ENCODE measurements at regions of chr2 and their contacts with region 1.

Region 1: DNA sequence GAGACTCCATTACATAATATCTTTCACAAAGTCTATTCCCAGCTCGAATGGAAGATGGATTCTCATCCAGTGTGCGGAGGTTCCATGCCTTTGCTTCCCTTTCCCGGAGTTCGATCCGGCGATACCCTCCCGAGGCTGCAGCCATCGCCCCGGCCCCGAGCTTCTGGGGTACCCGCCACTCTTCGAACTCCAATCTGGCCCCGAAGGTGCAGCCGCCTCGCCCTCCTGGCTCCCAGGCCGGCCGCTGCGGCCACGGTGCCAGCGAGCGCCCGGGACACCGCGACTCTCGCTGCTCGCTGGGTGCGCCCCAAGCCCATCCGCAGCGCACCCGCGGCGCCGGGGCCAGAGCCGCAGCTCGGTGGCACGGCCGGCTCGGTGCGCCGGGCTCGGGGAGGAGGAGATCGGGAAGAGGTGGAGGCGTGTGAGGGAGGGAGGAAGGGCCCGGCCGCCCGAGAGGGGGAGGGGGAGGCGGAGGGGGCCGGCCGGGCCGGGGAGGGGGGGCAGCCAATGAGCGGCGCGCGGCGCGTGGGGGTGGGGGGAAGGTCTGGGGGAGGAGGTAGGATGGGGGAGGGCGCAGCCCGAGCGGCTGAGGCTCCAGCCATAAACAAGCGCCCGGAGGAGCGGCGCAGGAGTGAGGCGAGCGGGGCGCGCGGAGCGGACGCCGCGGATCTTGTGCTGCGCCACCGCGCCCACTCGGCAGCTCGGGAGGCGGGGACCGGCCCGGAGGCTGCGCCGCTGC is at the start of gene CRIM1:
- DNase-seq: peak; percentile 84
- H3K4me3 Mint-ChIP-seq: peak within 1 kb of the TSS; percentile 99
- H3K27ac Mint-ChIP-seq: peak within 1 kb of the TSS; percentile 76
- H3K4me1 Mint-ChIP-seq: peaks cover 43% of the 10 kb centered on the region
- H3K27me3 Mint-ChIP-seq: no peaks in the 10 kb centered on the region
- CTCF ChIP-seq: no peak
- total RNA-seq, gene CRIM1: 48.0 and 57.6 TPM in 2 replicates

Region 2: GRCh38 chr2:36376319-36376765 is 21.0 kb after region 1 on chr2:
- CTCF ChIA-PET with region 1: interaction called, 4 read pairs
- intact Hi-C with region 1: loop called (anchors 2 kb)
- DNase-seq: peak; percentile 66
- H3K4me3 Mint-ChIP-seq: peak overlapping the region; percentile 66
- H3K27ac Mint-ChIP-seq: peak overlapping the region; percentile 86
- H3K4me1 Mint-ChIP-seq: peaks cover 72% of the 10 kb centered on the region
- H3K27me3 Mint-ChIP-seq: no peaks in the 10 kb centered on the region
- CTCF ChIP-seq: no peak

Region 3: DNA sequence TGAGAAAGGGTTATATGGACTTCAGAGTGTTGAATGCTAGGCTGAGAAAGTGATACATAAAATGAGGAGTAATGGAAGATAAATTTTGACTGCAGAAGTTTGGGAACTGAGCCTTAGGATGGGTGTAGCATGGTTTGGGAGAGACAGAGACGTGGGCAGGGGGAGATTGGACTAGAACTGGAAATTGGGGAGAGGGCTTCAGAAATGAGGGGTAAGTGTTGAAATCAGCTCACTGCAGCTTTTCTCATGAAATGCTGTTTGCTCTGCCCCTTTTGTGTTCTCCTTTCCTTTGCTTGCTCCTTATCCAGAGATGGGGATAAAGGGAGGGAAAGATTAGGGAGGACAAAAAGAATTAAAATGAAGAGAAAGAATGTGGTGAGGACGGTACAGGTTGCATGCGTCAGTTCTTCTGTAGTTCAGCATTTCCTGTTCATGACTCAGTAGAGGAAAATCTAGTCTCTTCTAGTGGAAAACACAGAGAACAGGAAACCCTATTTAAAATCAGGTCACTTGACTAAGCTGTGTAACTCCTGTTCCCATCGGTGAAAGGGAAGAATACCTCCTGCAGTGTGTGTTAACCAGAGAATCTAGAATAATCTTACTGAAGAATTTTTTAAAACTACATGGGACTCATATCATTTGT is 105.8 kb after region 1 on chr2:
- CTCF ChIA-PET with region 1: interaction called, 15 read pairs
- intact Hi-C with region 1: loop called (anchors 1 kb)
- DNase-seq: no peak
- H3K4me3 Mint-ChIP-seq: no peak overlapping the region
- H3K27ac Mint-ChIP-seq: no peak overlapping the region
- H3K4me1 Mint-ChIP-seq: peaks cover 16% of the 10 kb centered on the region
- H3K27me3 Mint-ChIP-seq: no peaks in the 10 kb centered on the region
- CTCF ChIP-seq: no peak

Region 4: DNA sequence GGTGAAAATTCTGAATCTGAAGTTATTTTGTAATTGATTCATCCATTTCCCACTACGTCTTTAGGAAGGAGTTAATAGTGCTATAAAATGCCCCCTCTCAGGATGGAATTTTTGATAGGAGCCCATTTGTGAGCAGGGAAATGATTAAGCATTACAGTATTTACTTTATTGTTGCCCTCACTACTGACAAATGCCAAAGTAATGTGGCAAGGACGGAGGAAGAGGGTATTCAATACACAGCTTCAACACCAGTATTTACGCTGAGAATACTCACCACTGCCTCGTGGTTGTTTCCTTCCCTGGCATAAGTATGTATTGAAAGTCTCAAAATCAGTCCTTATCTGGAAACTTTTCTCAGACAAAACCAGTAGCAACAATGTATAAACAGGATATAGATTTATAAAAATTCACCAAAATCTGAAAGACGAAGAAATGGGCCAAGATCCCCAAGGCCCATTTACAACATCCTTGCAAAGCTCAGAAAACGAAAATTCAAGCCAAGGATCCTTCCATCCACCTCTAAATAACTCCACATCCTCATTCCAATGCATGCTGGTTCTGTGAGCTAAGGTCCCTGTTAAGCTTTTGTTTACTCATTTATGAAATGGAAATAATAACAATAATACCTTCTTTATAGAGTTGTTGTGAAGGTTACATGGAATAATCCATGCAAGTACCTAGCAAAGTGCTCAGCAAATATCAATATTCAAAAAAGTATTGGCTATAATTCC is 213.4 kb after region 1 on chr2:
- CTCF ChIA-PET with region 1: no interaction called
- intact Hi-C with region 1: loop called (anchors 5 kb)
- DNase-seq: no peak
- H3K4me3 Mint-ChIP-seq: peak overlapping the region; percentile 45
- H3K27ac Mint-ChIP-seq: peak overlapping the region; percentile 85
- H3K4me1 Mint-ChIP-seq: peaks cover 48% of the 10 kb centered on the region
- H3K27me3 Mint-ChIP-seq: no peaks in the 10 kb centered on the region
- CTCF ChIP-seq: no peak

Region 5: GRCh38 chr2:36785179-36785795 is 430.0 kb after region 1 on chr2:
- CTCF ChIA-PET with region 1: no interaction called
- intact Hi-C with region 1: loop called (anchors 10 kb)
- DNase-seq: peak; percentile 77
- H3K4me3 Mint-ChIP-seq: no peak overlapping the region
- H3K27ac Mint-ChIP-seq: no peak overlapping the region
- H3K4me1 Mint-ChIP-seq: no peaks in the 10 kb centered on the region
- H3K27me3 Mint-ChIP-seq: peaks cover 66% of the 10 kb centered on the region
- CTCF ChIP-seq: peak; percentile 95